Activated B cell treated with CpG ODN at 0.5 μM for 24 hours (primary cell): ENCODE measurements at regions of chr3 and their contacts with region 1.

Region 1: GRCh38 chr3:30598668-30599545 is 7.5 kb upstream of the TGFBR2 start:
- DNase-seq: no peak
- ATAC-seq: peak; percentile 72
- H3K4me3 Mint-ChIP-seq: peak overlapping the region; percentile 44
- H3K27ac Mint-ChIP-seq: peak overlapping the region; percentile 86
- H3K4me1 Mint-ChIP-seq: peaks cover 61% of the 10 kb centered on the region
- H3K27me3 Mint-ChIP-seq: no peaks in the 10 kb centered on the region
- CTCF ChIP-seq: no peak

Region 2: DNA sequence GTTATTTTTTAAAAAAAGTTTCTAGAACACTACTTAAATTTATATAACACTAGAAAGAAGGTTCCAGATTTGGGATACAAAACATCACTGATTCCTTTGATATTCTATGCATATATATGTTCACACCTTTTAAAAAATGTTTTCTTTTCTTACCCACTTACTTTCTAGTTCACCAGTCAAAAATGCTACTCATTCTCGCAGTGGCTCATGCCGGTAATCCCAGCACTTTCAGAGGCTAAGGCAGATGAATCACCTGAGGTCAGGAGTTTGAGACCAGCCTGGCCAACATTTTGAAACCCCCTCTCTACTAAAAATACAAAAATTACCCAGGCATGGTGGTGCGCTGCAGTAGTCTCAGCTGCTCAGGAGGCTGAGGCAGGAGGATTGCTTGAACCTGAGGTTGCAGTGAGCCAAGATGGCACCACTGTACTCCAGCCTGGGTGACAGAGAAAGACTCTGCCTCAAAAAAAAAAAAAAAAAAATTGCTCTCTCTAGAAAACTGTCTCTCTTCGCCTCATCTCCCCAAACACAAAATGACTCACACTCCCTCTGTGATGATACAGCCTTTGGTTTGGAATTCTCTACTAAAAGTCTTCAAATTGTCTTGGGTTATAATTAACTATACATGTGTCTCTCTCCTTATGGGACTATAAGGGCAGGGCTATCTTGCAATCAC is 45.1 kb before region 1 on chr3:
- CTCF ChIA-PET with region 1: no interaction called
- POLR2A ChIA-PET with region 1: interaction called, 3 read pairs
- intact Hi-C with region 1: loop called (anchors 2 kb)
- DNase-seq: no peak
- ATAC-seq: no peak
- H3K4me3 Mint-ChIP-seq: no peak overlapping the region
- H3K27ac Mint-ChIP-seq: no peak overlapping the region
- H3K4me1 Mint-ChIP-seq: peaks cover 39% of the 10 kb centered on the region
- H3K27me3 Mint-ChIP-seq: no peaks in the 10 kb centered on the region
- CTCF ChIP-seq: no peak

Region 3: DNA sequence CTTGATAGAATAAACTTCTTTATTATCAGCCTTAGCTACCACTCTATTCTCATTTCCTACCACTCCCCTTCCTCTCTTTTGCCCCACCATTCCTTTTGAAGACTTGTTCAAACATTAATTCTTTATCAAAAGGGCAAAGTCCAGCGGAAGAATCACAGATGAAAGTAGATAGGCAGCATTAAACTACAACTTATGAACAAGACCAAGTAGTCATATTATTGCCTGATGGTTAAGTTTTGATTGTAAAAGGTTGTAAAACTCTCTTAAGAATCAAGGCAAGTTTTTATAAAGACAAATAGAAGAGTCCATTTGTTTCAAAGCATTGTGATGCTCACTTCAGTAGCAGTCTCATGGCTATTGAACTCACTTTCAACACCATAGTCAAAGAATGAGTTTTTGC is 14.9 kb before region 1 on chr3:
- CTCF ChIA-PET with region 1: no interaction called
- POLR2A ChIA-PET with region 1: no interaction called
- intact Hi-C with region 1: loop called (anchors 2 kb)
- DNase-seq: no peak
- ATAC-seq: no peak
- H3K4me3 Mint-ChIP-seq: no peak overlapping the region
- H3K27ac Mint-ChIP-seq: no peak overlapping the region
- H3K4me1 Mint-ChIP-seq: peaks cover 6% of the 10 kb centered on the region
- H3K27me3 Mint-ChIP-seq: no peaks in the 10 kb centered on the region
- CTCF ChIP-seq: no peak

Region 4: GRCh38 chr3:30747771-30748281 is 148.9 kb after region 1 on chr3:
- CTCF ChIA-PET with region 1: no interaction called
- POLR2A ChIA-PET with region 1: no interaction called
- intact Hi-C with region 1: no loop called
- DNase-seq: no peak
- ATAC-seq: no peak
- H3K4me3 Mint-ChIP-seq: no peak overlapping the region
- H3K27ac Mint-ChIP-seq: no peak overlapping the region
- H3K4me1 Mint-ChIP-seq: peaks cover 15% of the 10 kb centered on the region
- H3K27me3 Mint-ChIP-seq: peaks cover 7% of the 10 kb centered on the region
- CTCF ChIP-seq: no peak